CD8-positive, alpha-beta T cell (primary cell): ENCODE measurements at regions of chr22 and their contacts with region 1.

Region 1: DNA sequence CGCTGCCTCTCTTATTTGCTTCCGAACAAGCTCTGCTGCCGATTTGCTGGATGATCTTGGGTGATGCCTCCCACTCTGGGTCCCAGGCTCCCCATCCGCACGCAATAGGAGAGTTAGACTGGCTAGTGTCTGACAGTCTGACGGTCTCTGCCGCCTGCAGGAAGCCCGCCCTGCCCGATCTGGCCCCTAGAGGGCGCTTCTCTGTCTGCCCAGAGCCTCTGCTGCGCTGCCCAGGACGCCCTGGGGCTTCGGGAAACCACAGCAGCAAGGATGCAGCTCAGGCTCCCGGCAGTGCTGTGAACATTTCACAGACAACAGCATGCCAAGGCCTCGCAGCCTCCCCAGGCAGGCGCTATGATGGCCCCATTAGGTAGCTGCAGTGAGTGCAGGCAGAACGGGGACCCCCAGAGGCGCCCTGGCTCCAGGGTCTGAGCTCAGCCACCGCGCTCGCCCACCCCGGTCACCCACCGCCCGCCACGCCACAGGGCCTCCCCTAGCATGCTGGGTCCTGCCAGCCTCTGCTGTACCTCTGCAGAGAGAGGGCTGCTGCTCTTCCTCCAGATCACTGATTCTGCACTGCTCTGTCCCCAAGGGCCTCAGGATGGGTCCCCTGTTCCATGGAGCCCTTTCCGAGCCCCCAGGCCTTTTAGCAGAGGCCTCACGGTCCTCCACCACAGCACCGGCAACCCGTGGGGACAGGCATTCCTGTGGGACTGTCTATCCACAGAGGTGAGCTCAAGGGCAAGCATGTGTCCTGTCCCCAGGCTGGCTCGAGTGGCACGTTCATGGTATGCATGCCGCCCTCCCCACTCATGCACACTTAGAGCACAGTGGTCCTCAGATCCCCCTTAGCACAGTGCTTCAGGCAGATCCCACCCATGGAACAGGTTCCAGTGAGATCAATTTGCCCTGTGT is 4.3 kb upstream of the BAIAP2L2 start:
- DNase-seq: peak; percentile 61 to 85 (median 74)
- ATAC-seq: peak; percentile 95
- H3K4me3 ChIP-seq: no peak overlapping the region
- H3K4me3 Mint-ChIP-seq: no peak overlapping the region
- H3K27ac ChIP-seq: no peak overlapping the region
- H3K27ac Mint-ChIP-seq: no peak overlapping the region
- H3K4me1 ChIP-seq: no peaks in the 10 kb centered on the region
- H3K4me1 Mint-ChIP-seq: peaks cover 2% of the 10 kb centered on the region
- H3K27me3 ChIP-seq: no peaks in the 10 kb centered on the region
- H3K27me3 Mint-ChIP-seq: no peaks in the 10 kb centered on the region
- CTCF ChIP-seq: peak; percentile 84

Region 2: GRCh38 chr22:38097557-38098409 is 17.0 kb before region 1 on chr22:
- CTCF ChIA-PET with region 1: interaction called, 14 read pairs
- POLR2A ChIA-PET with region 1: no interaction called
- intact Hi-C with region 1: no loop called
- DNase-seq: peak in 2 of 9 experiments; percentile 1 to 6
- ATAC-seq: no peak
- H3K4me3 ChIP-seq: no peak overlapping the region
- H3K4me3 Mint-ChIP-seq: no peak overlapping the region
- H3K27ac ChIP-seq: no peak overlapping the region
- H3K27ac Mint-ChIP-seq: no peak overlapping the region
- H3K4me1 ChIP-seq: no peaks in the 10 kb centered on the region
- H3K4me1 Mint-ChIP-seq: no peaks in the 10 kb centered on the region
- H3K27me3 ChIP-seq: no peaks in the 10 kb centered on the region
- H3K27me3 Mint-ChIP-seq: no peaks in the 10 kb centered on the region
- CTCF ChIP-seq: no peak

Region 3: GRCh38 chr22:38230108-38230825 is 115.5 kb after region 1 on chr22:
- CTCF ChIA-PET with region 1: interaction called, 29 read pairs
- POLR2A ChIA-PET with region 1: no interaction called
- intact Hi-C with region 1: loop called (anchors 1 to 5 kb)
- DNase-seq: peak in 7 of 9 experiments; percentile 10 to 73 (median 47)
- ATAC-seq: peak; percentile 67
- H3K4me3 ChIP-seq: no peak overlapping the region
- H3K4me3 Mint-ChIP-seq: no peak overlapping the region
- H3K27ac ChIP-seq: peak overlapping the region in 1 of 2 experiments; percentile 31
- H3K27ac Mint-ChIP-seq: no peak overlapping the region
- H3K4me1 ChIP-seq: peaks cover 3% of the 10 kb centered on the region
- H3K4me1 Mint-ChIP-seq: no peaks in the 10 kb centered on the region
- H3K27me3 ChIP-seq: no peaks in the 10 kb centered on the region
- H3K27me3 Mint-ChIP-seq: no peaks in the 10 kb centered on the region
- CTCF ChIP-seq: peak; percentile 29